ENCODE measurements at regions of chr13 and their contacts with region 1.

Region 1: DNA sequence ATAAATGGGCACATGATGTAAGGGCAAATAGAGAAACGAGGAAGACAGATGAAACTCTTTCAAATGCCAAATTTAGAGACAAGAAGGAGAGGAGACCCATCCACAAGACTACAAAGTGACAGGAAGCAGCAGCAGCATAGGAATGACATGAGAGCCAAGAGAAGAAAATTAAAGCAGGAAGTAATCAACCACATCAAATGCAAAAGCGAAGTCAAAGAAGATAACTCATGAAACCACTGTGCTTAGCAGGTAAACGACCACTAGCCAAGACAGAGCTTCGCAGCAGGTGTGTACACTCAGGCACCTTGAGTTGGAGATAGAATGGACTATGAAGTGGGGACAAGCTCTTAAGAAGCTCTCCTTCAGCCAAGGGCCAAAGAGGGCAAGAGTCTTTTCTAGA is 64.1 kb downstream of the KLF12 start:
- DNase-seq: peak in 7 of 9 donors; percentile 59 to 82 (median 79)
- ATAC-seq: peak; percentile 85
- H3K4me3 ChIP-seq: peak overlapping the region; percentile 32
- H3K4me3 Mint-ChIP-seq: peak overlapping the region; percentile 58 to 88 (median 74)
- H3K27ac ChIP-seq: no peak overlapping the region
- H3K27ac Mint-ChIP-seq: peak overlapping the region; percentile 56 to 93 (median 83)
- H3K4me1 ChIP-seq: peaks cover 46 to 51% of the 10 kb centered on the region in 2 donors
- H3K4me1 Mint-ChIP-seq: peaks cover 49 to 90% (median 83%) of the 10 kb centered on the region in 7 donors
- H3K27me3 ChIP-seq: no peaks in the 10 kb centered on the region
- H3K27me3 Mint-ChIP-seq: no peaks in the 10 kb centered on the region

Region 2: DNA sequence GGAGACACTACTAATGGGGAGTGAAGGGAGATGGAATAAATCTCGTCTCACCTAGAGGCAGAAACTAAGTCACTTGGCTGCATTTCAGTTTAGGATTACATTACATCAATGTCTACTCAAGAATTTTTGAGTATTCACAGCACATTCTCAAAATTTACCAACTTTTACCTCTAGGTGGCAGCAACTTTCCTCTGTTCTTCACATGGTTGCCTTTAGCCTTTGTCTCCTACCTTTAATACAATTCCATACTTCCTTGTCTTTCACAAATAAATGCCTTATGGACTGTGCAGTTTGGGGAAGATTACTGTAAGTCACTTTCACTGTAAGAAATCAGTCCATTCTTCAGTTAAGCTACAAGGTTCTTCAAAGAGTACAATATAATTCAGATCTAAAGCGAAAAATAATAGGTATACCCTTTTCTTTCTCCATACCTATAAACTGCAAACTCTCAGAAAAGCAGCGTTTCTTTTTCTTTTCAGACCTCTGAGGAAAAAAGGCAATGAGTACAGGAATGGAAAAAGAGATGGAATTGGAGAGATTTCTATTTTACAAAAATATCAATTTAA is 315.3 kb before region 1 on chr13:
- CTCF ChIA-PET with region 1: no interaction called
- POLR2A ChIA-PET with region 1: no interaction called
- intact Hi-C with region 1: loop called in 1 of 2 experiments (anchors 1 kb)
- DNase-seq: peak in 7 of 9 donors; percentile 32 to 69 (median 59)
- ATAC-seq: peak; percentile 67
- H3K4me3 ChIP-seq: no peak overlapping the region
- H3K4me3 Mint-ChIP-seq: peak overlapping the region in 1 of 10 donors; percentile 5
- H3K27ac ChIP-seq: no peak overlapping the region
- H3K27ac Mint-ChIP-seq: peak overlapping the region; percentile 11 to 96 (median 79)
- H3K4me1 ChIP-seq: peaks cover 0 to 19% of the 10 kb centered on the region in 2 donors
- H3K4me1 Mint-ChIP-seq: peaks cover 13 to 76% (median 57%) of the 10 kb centered on the region in 7 donors
- H3K27me3 ChIP-seq: no peaks in the 10 kb centered on the region
- H3K27me3 Mint-ChIP-seq: no peaks in the 10 kb centered on the region

Region 3: DNA sequence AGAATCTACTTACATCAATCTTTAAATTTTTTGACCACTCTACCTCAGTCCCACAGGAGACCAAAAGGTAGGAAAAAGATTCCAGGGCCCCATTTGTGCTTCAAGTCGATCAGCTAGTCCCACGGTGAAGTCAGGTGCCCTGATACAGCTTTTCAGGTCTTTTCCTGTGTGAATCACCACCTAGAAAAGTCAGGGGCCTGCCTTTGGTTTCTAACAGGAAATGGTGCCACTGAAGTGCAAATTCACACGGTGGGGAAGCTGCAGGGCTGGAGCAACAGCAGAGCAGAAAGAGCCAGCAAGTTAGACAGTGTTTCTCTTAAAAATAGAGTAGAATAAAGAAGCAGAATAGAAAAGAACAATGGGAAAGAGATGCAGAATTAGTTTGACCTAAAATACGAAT is 43.3 kb before region 1 on chr13:
- CTCF ChIA-PET with region 1: no interaction called
- POLR2A ChIA-PET with region 1: no interaction called
- intact Hi-C with region 1: loop called (anchors 1 to 2 kb)
- DNase-seq: peak; percentile 22 to 77 (median 68)
- ATAC-seq: peak; percentile 94
- H3K4me3 ChIP-seq: peak overlapping the region; percentile 21
- H3K4me3 Mint-ChIP-seq: peak overlapping the region; percentile 77 to 92 (median 84)
- H3K27ac ChIP-seq: peak overlapping the region; percentile 77
- H3K27ac Mint-ChIP-seq: peak overlapping the region; percentile 80 to 97 (median 94)
- H3K4me1 ChIP-seq: peaks cover 51 to 59% of the 10 kb centered on the region in 2 donors
- H3K4me1 Mint-ChIP-seq: peaks cover 36 to 97% (median 94%) of the 10 kb centered on the region in 7 donors
- H3K27me3 ChIP-seq: no peaks in the 10 kb centered on the region
- H3K27me3 Mint-ChIP-seq: no peaks in the 10 kb centered on the region

Region 4: GRCh38 chr13:74090869-74091605 is 21.0 kb after region 1 on chr13:
- CTCF ChIA-PET with region 1: no interaction called
- POLR2A ChIA-PET with region 1: no interaction called
- intact Hi-C with region 1: loop called in 1 of 2 experiments (anchors 2 kb)
- DNase-seq: no peak
- ATAC-seq: no peak
- H3K4me3 ChIP-seq: no peak overlapping the region
- H3K4me3 Mint-ChIP-seq: peak overlapping the region; percentile 1 to 75 (median 44)
- H3K27ac ChIP-seq: no peak overlapping the region
- H3K27ac Mint-ChIP-seq: peak overlapping the region in 6 of 9 donors; percentile 3 to 90 (median 68)
- H3K4me1 ChIP-seq: peaks cover 36 to 43% of the 10 kb centered on the region in 2 donors
- H3K4me1 Mint-ChIP-seq: peaks cover 36 to 88% (median 77%) of the 10 kb centered on the region in 7 donors
- H3K27me3 ChIP-seq: no peaks in the 10 kb centered on the region
- H3K27me3 Mint-ChIP-seq: no peaks in the 10 kb centered on the region

Region 5: GRCh38 chr13:74230984-74231501 is 161.0 kb after region 1 on chr13:
- CTCF ChIA-PET with region 1: no interaction called
- POLR2A ChIA-PET with region 1: no interaction called
- intact Hi-C with region 1: loop called in 1 of 2 experiments (anchors 1 kb)
- DNase-seq: peak in 7 of 9 donors; percentile 37 to 78 (median 69)
- ATAC-seq: peak; percentile 85
- H3K4me3 ChIP-seq: peak overlapping the region; percentile 61
- H3K4me3 Mint-ChIP-seq: peak overlapping the region; percentile 72 to 87 (median 84)
- H3K27ac ChIP-seq: peak overlapping the region; percentile 70
- H3K27ac Mint-ChIP-seq: peak overlapping the region; percentile 86 to 97 (median 90)
- H3K4me1 ChIP-seq: peaks cover 0 to 29% of the 10 kb centered on the region in 2 donors
- H3K4me1 Mint-ChIP-seq: peaks cover 8 to 62% (median 52%) of the 10 kb centered on the region in 7 donors
- H3K27me3 ChIP-seq: no peaks in the 10 kb centered on the region
- H3K27me3 Mint-ChIP-seq: no peaks in the 10 kb centered on the region

Measured in naive thymus-derived CD4-positive, alpha-beta T cell (primary cell).